ENCODE measurements at regions of chr6 and their contacts with region 1.

Region 1: DNA sequence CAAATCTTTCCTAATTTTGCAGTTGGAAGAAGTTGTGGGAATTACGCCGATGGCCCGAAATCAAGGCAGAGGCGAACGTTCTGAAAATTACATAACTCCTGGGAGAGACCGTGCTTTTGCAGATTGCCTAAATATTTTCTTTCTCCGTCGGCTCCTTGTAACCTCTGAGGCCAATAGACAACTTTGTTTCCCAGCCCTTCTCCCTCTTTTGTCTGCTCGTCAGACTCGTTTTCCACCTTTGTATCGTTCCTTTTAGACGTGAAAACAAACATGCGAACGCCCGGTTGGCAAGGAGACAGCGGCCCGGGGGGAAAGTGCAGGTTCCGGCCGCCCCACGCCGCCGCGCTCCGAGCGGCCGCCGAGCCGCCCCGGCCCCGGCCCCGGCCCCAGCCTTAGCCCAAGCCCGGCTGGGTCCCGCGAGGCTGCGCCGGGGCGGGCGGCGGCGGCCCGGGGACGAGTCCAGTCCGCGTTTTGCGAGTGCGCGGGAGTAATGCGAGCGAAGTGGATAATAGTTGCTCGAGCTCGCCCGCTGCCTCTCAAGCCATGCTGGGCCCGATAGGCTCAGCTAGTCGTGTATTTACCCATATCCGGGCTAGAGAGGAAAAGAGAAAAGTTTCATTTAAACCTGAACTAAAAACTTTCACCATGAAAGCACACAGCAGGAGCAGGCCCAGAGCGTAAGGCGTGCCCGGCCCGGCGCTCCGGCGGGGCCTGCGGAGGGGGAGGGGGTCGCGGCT is at the start of gene ARID1B:
- DNase-seq: peak; percentile 80
- ATAC-seq: peak; percentile 68
- H3K4me3 Mint-ChIP-seq: peak within 1 kb of the TSS; percentile 93
- H3K27ac Mint-ChIP-seq: peak within 1 kb of the TSS; percentile 97
- H3K4me1 Mint-ChIP-seq: peaks cover 53% of the 10 kb centered on the region
- H3K27me3 Mint-ChIP-seq: no peaks in the 10 kb centered on the region
- CTCF ChIP-seq: no peak
- total RNA-seq, gene ARID1B: 194 and 248 TPM in 2 replicates

Region 2: DNA sequence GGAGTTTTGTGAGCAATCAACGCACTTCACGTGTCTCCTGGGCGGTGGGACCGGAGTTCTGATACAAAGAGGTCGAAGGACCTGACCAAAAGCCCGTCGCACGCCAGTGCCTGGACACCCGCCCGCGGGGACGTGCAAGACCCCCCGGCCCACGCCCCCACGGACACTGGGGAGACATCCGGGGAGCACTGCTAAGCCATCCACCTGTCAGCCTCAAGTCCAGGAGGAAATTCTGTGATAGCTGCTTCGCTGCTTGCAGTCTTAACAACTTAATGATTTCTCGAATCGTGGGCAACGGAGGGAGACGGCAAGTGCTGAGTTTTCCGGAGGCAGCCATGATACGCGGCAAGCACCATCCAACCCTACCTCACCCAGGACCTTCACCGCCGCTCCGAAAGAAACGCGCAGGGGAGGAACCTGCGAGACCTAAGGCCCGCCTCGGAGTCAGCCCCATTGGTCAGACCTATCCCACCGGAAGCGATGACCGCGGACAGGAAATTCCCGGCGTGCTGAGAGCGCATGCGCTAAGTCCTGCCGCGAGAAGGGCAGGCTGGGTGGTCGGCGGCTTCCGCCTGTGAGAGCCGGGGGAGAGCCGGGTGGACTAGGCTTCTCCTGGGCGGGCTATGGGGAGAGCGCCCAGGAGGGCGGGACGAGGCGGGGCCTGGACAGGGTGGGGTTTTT is 1462.8 kb before region 1 on chr6 and contains the start of gene TFB1M:
- CTCF ChIA-PET with region 1: no interaction called
- POLR2A ChIA-PET with region 1: no interaction called
- intact Hi-C with region 1: loop called (anchors 2 kb)
- DNase-seq: peak; percentile 90
- ATAC-seq: peak; percentile 94
- H3K4me3 Mint-ChIP-seq: peak within 1 kb of the TSS; percentile 97
- H3K27ac Mint-ChIP-seq: peak within 1 kb of the TSS; percentile 93
- H3K4me1 Mint-ChIP-seq: peaks cover 28% of the 10 kb centered on the region
- H3K27me3 Mint-ChIP-seq: no peaks in the 10 kb centered on the region
- CTCF ChIP-seq: no peak
- total RNA-seq, gene TFB1M: 35.2 and 41.5 TPM in 2 replicates

Region 3: GRCh38 chr6:155580904-155581303 is 1196.1 kb before region 1 on chr6:
- CTCF ChIA-PET with region 1: no interaction called
- POLR2A ChIA-PET with region 1: no interaction called
- intact Hi-C with region 1: no loop called
- DNase-seq: no peak
- ATAC-seq: no peak
- H3K4me3 Mint-ChIP-seq: no peak overlapping the region
- H3K27ac Mint-ChIP-seq: no peak overlapping the region
- H3K4me1 Mint-ChIP-seq: no peaks in the 10 kb centered on the region
- H3K27me3 Mint-ChIP-seq: no peaks in the 10 kb centered on the region
- CTCF ChIP-seq: no peak

Region 4: DNA sequence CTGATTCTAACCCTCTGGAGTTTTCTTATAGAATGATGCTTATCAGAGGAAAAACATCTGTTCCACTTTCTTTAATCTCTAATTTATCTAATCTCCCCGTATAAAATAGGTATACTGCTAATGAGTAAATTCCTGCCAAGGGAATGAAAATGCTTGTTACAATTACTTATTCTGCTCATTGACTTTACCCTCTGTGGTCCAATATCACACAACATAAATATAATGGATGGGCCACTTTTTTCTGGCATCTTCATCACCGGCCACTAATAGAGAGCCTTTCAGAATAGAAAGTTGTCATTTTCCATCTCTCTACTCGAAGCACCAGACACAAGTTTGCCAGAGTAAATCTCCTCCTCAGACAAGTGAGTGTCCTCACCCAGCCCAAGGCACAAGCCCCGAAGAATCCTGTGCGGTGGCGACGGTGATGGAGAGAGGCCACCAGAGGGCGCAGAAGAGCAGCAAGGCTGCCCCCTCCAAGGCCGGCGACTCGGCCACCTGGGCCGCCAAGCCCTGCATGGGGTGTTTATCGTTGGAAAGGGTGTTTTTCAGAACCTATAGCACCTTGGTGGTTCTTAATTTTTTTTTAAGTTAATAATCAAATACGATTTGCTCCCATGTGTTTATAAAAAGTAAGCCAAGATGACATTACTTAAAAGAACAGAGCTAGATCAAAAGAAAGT is 212.7 kb before region 1 on chr6:
- CTCF ChIA-PET with region 1: interaction called, 4 read pairs
- POLR2A ChIA-PET with region 1: interaction called, 6 read pairs
- intact Hi-C with region 1: loop called (anchors 1 kb)
- DNase-seq: peak; percentile 78
- ATAC-seq: peak; percentile 100
- H3K4me3 Mint-ChIP-seq: no peak overlapping the region
- H3K27ac Mint-ChIP-seq: no peak overlapping the region
- H3K4me1 Mint-ChIP-seq: peaks cover 10% of the 10 kb centered on the region
- H3K27me3 Mint-ChIP-seq: peaks cover 5% of the 10 kb centered on the region
- CTCF ChIP-seq: peak; percentile 76

Region 5: GRCh38 chr6:156699017-156699421 is 78.0 kb before region 1 on chr6:
- CTCF ChIA-PET with region 1: interaction called, 5 read pairs
- POLR2A ChIA-PET with region 1: interaction called, 21 read pairs
- intact Hi-C with region 1: loop called (anchors 1 kb)
- DNase-seq: no peak
- ATAC-seq: peak; percentile 45
- H3K4me3 Mint-ChIP-seq: peak overlapping the region; percentile 74
- H3K27ac Mint-ChIP-seq: peak overlapping the region; percentile 92
- H3K4me1 Mint-ChIP-seq: peaks cover 79% of the 10 kb centered on the region
- H3K27me3 Mint-ChIP-seq: no peaks in the 10 kb centered on the region
- CTCF ChIP-seq: no peak

Region 6: DNA sequence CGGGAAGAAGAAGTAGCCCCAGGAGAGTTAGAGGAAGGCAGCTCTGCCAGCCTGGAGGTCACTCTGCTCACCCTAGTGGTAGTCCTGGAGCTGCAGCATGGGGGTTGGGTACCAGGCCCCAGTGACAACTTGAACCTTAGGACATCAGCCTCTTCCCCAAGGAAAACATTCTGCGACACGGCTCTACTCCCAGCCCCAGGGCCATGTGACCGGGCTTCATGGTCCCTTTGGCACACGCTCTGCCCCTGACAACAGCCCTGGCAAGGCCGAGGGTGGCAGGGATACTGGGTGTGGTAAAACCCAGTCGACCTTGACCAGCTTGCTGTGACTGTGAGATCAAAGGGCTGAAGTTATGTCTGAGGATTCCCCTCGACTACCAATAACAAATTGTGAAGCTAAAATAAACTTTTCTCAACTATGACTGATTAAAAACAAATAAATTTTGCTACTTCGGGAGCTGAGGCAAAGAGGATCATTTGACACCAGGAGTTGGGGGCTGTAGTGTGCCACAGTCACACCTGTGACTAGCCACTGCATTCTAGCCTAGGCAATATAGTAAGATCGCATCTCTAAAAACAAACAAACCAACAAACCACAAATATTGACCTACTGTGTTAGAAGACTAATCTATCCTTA is 24.2 kb before region 1 on chr6:
- CTCF ChIA-PET with region 1: interaction called, 4 read pairs
- POLR2A ChIA-PET with region 1: interaction called, 38 read pairs
- intact Hi-C with region 1: no loop called
- DNase-seq: peak; percentile 32
- ATAC-seq: peak; percentile 97
- H3K4me3 Mint-ChIP-seq: peak overlapping the region; percentile 25
- H3K27ac Mint-ChIP-seq: peak overlapping the region; percentile 72
- H3K4me1 Mint-ChIP-seq: peaks cover 48% of the 10 kb centered on the region
- H3K27me3 Mint-ChIP-seq: no peaks in the 10 kb centered on the region
- CTCF ChIP-seq: no peak

Region 7: GRCh38 chr6:157021344-157021992 is 244.5 kb after region 1 on chr6:
- CTCF ChIA-PET with region 1: interaction called, 3 read pairs
- POLR2A ChIA-PET with region 1: interaction called, 33 read pairs
- intact Hi-C with region 1: loop called (anchors 1 kb)
- DNase-seq: peak; percentile 87
- ATAC-seq: peak; percentile 79
- H3K4me3 Mint-ChIP-seq: peak overlapping the region; percentile 90
- H3K27ac Mint-ChIP-seq: peak overlapping the region; percentile 98
- H3K4me1 Mint-ChIP-seq: peaks cover 66% of the 10 kb centered on the region
- H3K27me3 Mint-ChIP-seq: no peaks in the 10 kb centered on the region
- CTCF ChIP-seq: no peak

Region 8: GRCh38 chr6:157274471-157275226 is 497.6 kb after region 1 on chr6:
- CTCF ChIA-PET with region 1: no interaction called
- POLR2A ChIA-PET with region 1: no interaction called
- intact Hi-C with region 1: loop called (anchors 2 kb)
- DNase-seq: peak; percentile 93
- ATAC-seq: peak; percentile 79
- H3K4me3 Mint-ChIP-seq: peak overlapping the region; percentile 94
- H3K27ac Mint-ChIP-seq: peak overlapping the region; percentile 96
- H3K4me1 Mint-ChIP-seq: peaks cover 9% of the 10 kb centered on the region
- H3K27me3 Mint-ChIP-seq: no peaks in the 10 kb centered on the region
- CTCF ChIP-seq: no peak